ENCODE measurements at regions of chr19 and their contacts with region 1.

Region 1: DNA sequence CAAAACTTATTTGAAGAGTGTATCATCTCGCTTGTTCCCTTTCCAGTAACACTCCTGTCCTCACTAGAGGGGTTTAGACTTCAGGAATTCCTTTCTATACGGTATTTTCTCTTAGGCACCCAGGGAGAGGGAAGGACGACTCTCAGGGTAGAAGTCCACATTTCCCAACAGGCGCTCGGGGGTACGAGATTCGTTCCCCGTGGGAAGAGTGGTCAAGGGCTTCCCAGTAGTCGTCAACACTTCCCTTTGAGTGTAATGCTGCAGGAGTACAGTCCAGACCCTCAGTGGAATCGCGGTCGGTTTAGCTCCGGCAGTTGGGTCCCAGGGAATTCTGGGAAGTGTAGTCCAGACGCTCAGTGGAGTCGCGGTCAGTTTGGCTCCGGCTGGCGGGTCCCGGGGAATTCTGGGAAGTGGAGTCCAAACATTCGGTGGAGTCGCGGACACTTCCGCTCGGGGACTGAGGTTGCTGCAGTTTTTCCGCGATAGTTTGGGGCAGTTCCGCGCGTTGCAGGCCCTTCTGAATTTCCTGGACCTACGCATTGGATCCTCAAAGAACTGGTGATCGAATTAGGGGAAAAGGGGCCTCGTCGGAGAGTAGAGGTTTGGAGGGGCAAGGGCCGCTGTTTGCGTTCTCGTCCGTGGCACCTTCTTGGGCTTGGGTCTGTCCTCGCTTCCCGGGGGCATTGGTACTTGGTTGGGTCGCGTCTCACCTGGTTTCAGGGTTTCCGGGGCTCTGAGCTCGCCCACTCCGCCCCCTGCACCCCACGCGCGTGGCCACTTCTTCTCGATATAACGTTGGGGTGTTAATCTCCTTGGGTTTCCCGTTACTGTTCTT is at the start of gene ZNF224:
- DNase-seq: peak; percentile 92
- ATAC-seq: peak; percentile 93
- H3K4me3 Mint-ChIP-seq: peak within 1 kb of the TSS; percentile 99
- H3K27ac Mint-ChIP-seq: peak within 1 kb of the TSS; percentile 95
- H3K4me1 Mint-ChIP-seq: peaks cover 11% of the 10 kb centered on the region
- H3K27me3 Mint-ChIP-seq: no peaks in the 10 kb centered on the region
- total RNA-seq, gene ZNF224: 12.6 to 13.9 TPM

Region 2: DNA sequence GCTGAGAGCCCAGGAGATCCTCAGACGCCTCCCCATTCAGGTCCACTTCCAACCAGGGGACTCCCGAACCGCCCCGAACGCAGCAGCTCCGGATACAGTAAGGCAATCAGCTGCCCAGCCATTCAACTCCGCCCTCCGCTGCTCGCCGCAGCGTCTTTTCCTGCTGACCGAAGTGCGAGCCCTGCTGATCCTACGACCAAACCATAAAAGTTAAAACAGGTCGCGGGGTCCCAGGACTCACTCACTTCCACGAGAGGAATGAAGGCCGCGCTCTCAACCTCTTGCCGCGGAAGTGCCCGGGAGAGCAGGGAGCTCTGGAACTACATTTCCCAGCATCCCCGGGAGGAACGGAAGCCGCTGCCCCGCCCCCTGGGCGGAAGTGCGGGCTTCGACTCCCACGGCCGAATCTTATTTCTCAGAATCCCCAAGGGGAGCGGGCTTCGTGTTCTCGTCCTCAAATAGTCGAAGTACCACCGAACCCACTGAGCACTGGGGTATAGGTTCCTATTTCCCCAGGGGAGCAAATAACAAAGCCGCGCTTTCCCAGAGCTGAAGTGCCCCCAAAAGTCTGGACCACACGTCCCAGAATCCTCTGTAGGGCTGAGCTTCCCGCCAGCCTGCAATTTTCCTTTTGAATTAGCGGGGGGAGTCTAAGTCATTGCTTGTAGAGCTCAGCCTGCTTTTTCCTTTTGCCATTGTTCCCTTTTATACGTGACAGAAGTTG is 159.0 kb before region 1 on chr19 and contains the start of gene ZNF45:
- CTCF ChIA-PET with region 1: interaction called, 5 read pairs
- POLR2A ChIA-PET with region 1: no interaction called
- intact Hi-C with region 1: loop called (anchors 1 to 10 kb)
- DNase-seq: peak; percentile 92
- ATAC-seq: peak; percentile 95
- H3K4me3 Mint-ChIP-seq: peak within 1 kb of the TSS; percentile 93
- H3K27ac Mint-ChIP-seq: peak within 1 kb of the TSS; percentile 91
- H3K4me1 Mint-ChIP-seq: peaks cover 22% of the 10 kb centered on the region
- H3K27me3 Mint-ChIP-seq: no peaks in the 10 kb centered on the region
- total RNA-seq, gene ZNF45: 9.6 to 12.1 TPM

Region 3: GRCh38 chr19:44002566-44003460 is 91.3 kb before region 1 on chr19 and contains the start of gene ZNF230:
- CTCF ChIA-PET with region 1: interaction called, 3 read pairs
- POLR2A ChIA-PET with region 1: no interaction called
- intact Hi-C with region 1: loop called (anchors 1 kb)
- DNase-seq: peak; percentile 90
- ATAC-seq: peak; percentile 99
- H3K4me3 Mint-ChIP-seq: peak within 1 kb of the TSS; percentile 85
- H3K27ac Mint-ChIP-seq: peak within 1 kb of the TSS; percentile 98
- H3K4me1 Mint-ChIP-seq: peaks cover 16% of the 10 kb centered on the region
- H3K27me3 Mint-ChIP-seq: no peaks in the 10 kb centered on the region
- total RNA-seq, gene ZNF230: 3.0 to 3.8 TPM

Region 4: DNA sequence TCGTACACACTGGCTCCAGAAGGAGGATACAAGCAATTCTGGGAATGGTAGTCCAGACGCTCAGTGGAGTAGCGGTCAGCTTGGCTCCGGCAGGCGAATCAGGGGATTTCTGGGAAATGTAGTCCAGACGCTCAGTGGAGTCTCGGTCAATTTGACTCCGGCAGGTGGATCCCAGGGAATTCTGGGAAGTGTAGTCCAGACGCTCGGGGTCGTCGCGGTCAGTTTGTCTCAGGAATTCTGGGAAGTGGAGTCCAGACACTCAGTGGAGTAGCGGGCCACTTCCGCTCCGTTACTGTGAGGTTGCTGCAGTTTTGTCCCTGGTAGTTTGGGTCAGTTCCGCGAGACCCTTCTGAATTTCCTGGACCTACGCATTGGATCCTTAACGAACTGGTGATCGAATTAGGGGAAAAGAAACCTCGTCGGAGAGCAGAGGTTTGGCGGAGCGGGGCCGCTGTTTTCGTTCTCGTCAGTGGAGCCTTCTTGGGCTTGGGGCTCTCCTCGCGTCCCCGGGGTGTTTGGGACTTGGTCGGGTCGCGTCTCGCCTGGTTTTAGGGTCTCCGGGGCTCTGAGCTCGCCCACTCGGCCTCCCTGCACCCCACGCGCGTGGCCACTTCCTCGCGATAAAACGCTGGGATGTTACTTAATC is 19.1 kb after region 1 on chr19 and contains the start of gene ZNF225:
- CTCF ChIA-PET with region 1: interaction called, 6 read pairs
- POLR2A ChIA-PET with region 1: no interaction called
- intact Hi-C with region 1: loop called (anchors 1 kb)
- DNase-seq: peak; percentile 88
- ATAC-seq: peak; percentile 94
- H3K4me3 Mint-ChIP-seq: peak within 1 kb of the TSS; percentile 99
- H3K27ac Mint-ChIP-seq: peak within 1 kb of the TSS; percentile 93
- H3K4me1 Mint-ChIP-seq: peaks cover 19% of the 10 kb centered on the region
- H3K27me3 Mint-ChIP-seq: no peaks in the 10 kb centered on the region
- total RNA-seq, gene ZNF225: 2.6 to 3.1 TPM

Region 5: DNA sequence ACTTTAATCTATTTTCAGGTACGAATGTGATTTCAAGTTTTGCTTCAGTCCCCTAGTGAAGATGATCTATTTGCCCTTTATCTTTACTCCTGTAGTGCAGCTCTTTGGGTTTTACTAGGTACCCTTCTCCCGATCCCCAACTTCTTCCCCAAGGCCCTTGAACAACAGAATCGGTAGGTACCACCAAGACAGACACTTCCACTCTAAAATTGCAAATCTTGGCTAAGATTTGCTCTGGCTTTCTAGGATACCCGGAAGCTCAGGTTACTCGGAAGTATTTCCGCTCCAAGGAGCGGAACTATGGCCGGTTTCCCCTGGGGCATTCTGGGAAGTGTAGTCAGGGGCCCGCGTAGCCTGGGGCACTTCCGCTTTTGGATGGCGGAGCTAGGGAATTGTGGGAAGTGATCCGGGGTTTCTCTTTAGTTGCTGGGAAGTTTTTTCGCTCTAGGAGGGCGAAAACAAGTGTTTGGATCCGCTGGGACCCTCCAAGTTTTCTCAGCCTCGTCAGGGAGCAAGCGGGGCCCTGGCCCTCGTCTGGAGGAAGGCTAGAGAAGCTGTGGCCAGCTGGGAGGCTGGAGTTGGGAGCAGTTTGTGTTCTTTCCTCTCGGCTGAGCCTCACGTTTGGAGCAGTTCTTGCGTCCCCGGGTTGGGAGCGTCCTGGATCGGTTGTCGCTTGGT is 113.1 kb after region 1 on chr19:
- CTCF ChIA-PET with region 1: interaction called, 3 read pairs
- POLR2A ChIA-PET with region 1: no interaction called
- intact Hi-C with region 1: loop called (anchors 1 to 2 kb)
- DNase-seq: peak; percentile 84
- ATAC-seq: peak; percentile 93
- H3K4me3 Mint-ChIP-seq: peak overlapping the region; percentile 80
- H3K27ac Mint-ChIP-seq: peak overlapping the region; percentile 73
- H3K4me1 Mint-ChIP-seq: peaks cover 4% of the 10 kb centered on the region
- H3K27me3 Mint-ChIP-seq: peaks cover 2% of the 10 kb centered on the region

Region 6: DNA sequence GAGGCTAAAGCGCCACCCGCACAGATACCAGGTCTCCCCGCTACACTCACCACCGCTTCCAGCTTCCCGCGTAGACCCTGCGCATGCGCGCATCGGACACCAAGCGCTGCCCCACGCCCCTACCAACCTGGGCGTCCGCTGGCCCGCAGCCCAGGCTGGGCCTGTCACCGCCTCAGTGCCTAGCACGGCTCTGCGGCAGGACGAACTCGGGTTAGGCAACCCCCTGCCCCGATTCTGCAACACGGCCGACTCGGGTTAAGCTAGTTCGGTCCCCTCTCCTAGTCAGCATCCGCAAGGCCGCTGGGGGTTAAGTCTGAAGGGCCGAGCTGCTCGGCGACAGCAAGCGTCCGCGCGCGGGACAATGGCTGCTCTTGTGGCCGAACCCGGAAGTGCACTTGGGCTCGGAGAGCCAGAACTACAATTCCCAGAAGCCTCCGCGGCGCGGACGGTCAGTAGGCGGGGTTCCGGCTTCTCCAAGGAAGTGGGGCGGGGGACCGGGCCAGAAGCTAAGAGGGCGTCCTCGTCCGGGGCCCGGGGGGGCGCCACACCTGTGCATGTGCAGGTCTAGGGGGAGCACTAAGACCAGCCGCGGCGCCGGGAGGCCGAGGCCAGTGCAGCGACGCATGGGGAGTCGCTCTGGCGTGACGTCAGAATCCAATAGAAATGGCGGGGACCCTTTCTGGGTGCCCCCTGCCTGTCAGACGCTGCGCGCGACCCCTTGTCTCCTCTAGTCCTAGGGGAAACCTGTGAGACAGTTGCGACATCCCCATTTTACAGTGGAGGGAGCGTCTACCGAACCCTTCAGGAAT is 406.2 kb after region 1 on chr19 and contains the start of gene ZNF180:
- CTCF ChIA-PET with region 1: no interaction called
- POLR2A ChIA-PET with region 1: no interaction called
- intact Hi-C with region 1: loop called in 1 of 2 experiments (anchors 1 kb)
- DNase-seq: peak; percentile 97
- ATAC-seq: peak; percentile 88
- H3K4me3 Mint-ChIP-seq: peak within 1 kb of the TSS; percentile 91
- H3K27ac Mint-ChIP-seq: peak within 1 kb of the TSS; percentile 94
- H3K4me1 Mint-ChIP-seq: peaks cover 28% of the 10 kb centered on the region
- H3K27me3 Mint-ChIP-seq: peaks cover 5% of the 10 kb centered on the region
- total RNA-seq, gene ZNF180: 5.5 to 7.7 TPM

Region 7: GRCh38 chr19:44576843-44577565 is 482.9 kb after region 1 on chr19:
- CTCF ChIA-PET with region 1: no interaction called
- POLR2A ChIA-PET with region 1: no interaction called
- intact Hi-C with region 1: no loop called
- DNase-seq: peak; percentile 63
- ATAC-seq: peak; percentile 72
- H3K4me3 Mint-ChIP-seq: no peak overlapping the region
- H3K27ac Mint-ChIP-seq: no peak overlapping the region
- H3K4me1 Mint-ChIP-seq: no peaks in the 10 kb centered on the region
- H3K27me3 Mint-ChIP-seq: no peaks in the 10 kb centered on the region

Measured in activated CD4-positive, alpha-beta T cell treated with anti-CD3 and anti-CD28 coated beads for 36 hours (primary cell).